H1 (cell line): ENCODE measurements at regions of chr1 and their contacts with region 1.

Region 1: DNA sequence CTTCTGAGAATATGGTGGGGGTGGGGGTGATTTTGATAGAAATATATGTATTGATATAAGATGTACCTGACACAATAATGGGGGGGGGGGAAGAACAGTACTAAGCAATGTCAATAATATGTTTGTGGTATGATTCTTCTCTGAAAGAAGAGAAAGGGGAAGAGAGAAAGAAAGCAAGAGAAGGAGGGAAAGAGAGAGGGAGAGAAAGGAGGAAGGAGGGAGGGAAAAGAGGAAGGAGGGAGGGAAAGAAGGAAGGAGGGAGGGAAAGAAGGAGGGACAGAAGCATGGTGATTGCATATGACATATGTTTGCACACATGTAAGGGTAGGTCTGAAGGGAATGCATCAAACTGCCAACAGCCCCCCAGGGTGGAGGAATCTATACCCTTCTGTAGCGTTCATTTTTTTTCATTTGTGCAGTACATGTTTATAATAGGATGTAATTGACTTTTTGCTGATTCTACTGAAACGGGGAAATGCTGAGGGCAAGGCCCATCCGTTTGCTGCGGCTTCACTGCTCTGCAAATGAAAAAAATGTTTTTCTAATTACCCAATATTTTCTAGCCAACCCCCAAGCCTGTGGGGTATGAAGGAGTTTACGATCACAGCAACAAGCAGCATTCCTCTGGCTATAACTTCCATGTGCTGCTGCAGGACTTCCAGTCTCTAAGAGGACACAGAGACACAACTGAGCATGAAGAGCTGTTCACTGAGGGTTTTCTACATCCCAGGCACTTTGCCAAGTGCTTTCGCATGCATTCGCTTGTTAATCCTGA is 119.3 kb upstream of the ZC3H12A start:
- DNase-seq: no peak
- H3K4me3 ChIP-seq: no peak overlapping the region
- H3K27ac ChIP-seq: no peak overlapping the region
- H3K4me1 ChIP-seq: no peaks in the 10 kb centered on the region
- H3K27me3 ChIP-seq: no peaks in the 10 kb centered on the region
- CTCF ChIP-seq: no peak
- EP300 ChIP-seq: no peak
- POLR2A ChIP-seq: no peak
- RAD21 ChIP-seq: no peak

Region 2: GRCh38 chr1:37186246-37186756 is 168.8 kb before region 1 on chr1:
- CTCF ChIA-PET with region 1: no interaction called
- POLR2A ChIA-PET with region 1: no interaction called
- DNase-seq: no peak
- H3K4me3 ChIP-seq: no peak overlapping the region
- H3K27ac ChIP-seq: no peak overlapping the region
- H3K4me1 ChIP-seq: peaks cover 0 to 5% (median under 1%) of the 10 kb centered on the region in 4 experiments; a peak in 2 of 7 replicates
- H3K27me3 ChIP-seq: no peaks in the 10 kb centered on the region
- CTCF ChIP-seq: no peak
- EP300 ChIP-seq: no peak
- POLR2A ChIP-seq: no peak
- RAD21 ChIP-seq: no peak

Region 3: DNA sequence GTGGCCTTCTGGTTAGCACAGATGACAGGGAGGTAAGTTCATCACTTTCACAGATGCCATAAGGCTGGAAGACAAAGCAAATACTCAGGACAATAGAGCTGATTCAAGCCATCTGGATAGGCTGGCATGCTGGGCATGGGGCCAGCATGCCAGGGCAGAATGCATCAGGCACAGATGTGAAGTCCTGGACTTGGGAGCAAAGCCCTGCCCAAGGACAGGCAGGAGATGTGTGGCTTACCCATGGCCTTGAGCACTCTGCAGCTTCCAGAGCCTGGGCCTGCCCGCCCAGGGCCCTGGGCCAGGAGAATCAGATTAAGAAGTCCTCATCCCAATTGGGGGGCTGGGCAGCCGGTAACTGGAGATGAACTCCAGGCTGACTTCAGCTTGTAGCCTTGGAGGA is 16.4 kb before region 1 on chr1:
- CTCF ChIA-PET with region 1: interaction called, 16 read pairs
- POLR2A ChIA-PET with region 1: no interaction called
- DNase-seq: no peak
- H3K4me3 ChIP-seq: no peak overlapping the region
- H3K27ac ChIP-seq: no peak overlapping the region
- H3K4me1 ChIP-seq: peaks cover 0 to 3% (median 1%) of the 10 kb centered on the region in 4 experiments; a peak in 2 of 7 replicates
- H3K27me3 ChIP-seq: no peaks in the 10 kb centered on the region
- CTCF ChIP-seq: no peak
- EP300 ChIP-seq: no peak
- POLR2A ChIP-seq: no peak
- RAD21 ChIP-seq: no peak

Region 4: GRCh38 chr1:37415611-37416244 is 60.7 kb after region 1 on chr1:
- CTCF ChIA-PET with region 1: no interaction called
- POLR2A ChIA-PET with region 1: no interaction called
- DNase-seq: no peak
- H3K4me3 ChIP-seq: no peak overlapping the region
- H3K27ac ChIP-seq: no peak overlapping the region
- H3K4me1 ChIP-seq: no peaks in the 10 kb centered on the region; a peak in 3 of 7 replicates
- H3K27me3 ChIP-seq: no peaks in the 10 kb centered on the region
- CTCF ChIP-seq: no peak
- EP300 ChIP-seq: no peak
- POLR2A ChIP-seq: no peak
- RAD21 ChIP-seq: no peak

Region 5: GRCh38 chr1:37461469-37462436 is 106.7 kb after region 1 on chr1:
- CTCF ChIA-PET with region 1: no interaction called
- POLR2A ChIA-PET with region 1: no interaction called
- DNase-seq: no peak
- H3K4me3 ChIP-seq: no peak overlapping the region
- H3K27ac ChIP-seq: no peak overlapping the region
- H3K4me1 ChIP-seq: 0 out of 7 replicates have a peak, but pooled peaks cover 0 to 2% (median 0%) of the 10 kb centered on the region in 4 experiments
- H3K27me3 ChIP-seq: no peaks in the 10 kb centered on the region
- CTCF ChIP-seq: no peak
- EP300 ChIP-seq: no peak
- POLR2A ChIP-seq: no peak
- RAD21 ChIP-seq: no peak